ENCODE measurements at regions of chr21 and their contacts with region 1.

Region 1: DNA sequence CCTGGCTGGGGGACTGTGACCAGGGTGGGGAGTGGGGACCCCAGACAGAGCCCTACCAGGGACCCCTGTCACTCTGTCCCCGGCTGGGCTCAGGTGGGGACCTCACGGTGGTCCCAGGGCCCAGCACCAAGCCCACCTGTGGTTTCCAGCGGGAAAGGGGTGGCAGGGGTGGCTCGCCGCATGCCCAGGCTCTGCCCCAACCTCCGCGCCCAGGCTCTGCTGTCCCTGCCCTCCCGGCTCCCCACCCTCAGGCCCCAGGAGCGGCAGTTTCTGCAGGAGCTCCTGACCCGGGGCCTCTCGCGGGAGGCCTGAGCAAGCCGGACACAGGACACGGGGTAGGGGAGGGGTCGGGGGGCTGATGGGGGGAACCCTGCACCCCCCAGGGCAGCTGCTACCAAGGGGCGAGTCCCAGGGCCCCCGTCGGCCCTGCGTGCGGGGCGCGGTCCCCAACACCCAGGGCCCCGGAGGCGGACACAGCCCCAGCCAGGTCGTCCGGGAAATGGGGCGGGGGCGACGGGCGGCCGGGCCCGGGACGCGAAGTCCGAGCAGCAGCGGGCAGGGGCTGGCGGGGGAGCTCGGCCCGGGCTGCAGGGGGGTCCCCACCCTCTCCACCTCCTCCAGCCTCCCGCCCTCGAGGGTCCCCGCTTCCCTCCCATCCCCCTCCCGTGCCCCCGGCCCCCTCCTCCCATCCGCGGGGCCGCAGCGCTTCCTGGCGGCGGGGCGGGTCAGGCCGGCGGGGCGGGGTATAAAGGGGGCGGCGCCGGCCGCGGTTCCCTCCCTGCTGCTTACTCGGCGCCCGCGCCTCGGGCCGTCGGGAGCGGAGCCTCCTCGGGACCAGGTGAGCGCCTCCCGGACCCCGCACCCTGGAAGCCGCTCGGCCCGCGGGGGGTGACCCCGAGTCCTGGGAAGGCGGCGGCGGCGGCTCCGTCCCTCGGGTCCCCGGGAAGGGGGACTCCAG is at the start of gene COL6A2:
- DNase-seq: peak; percentile 8 to 83
- H3K4me3 ChIP-seq: peak within 1 kb of the TSS; percentile 85 to 98
- H3K27ac ChIP-seq: peak within 1 kb of the TSS; percentile 98 to 99
- H3K4me1 ChIP-seq: peaks cover 14 to 20% of the 10 kb centered on the region in 2 donors
- H3K27me3 ChIP-seq: no peaks in the 10 kb centered on the region
- CTCF ChIP-seq: peak in 2 of 3 experiments; percentile 39 to 66
- total RNA-seq, gene COL6A2: 1,704 TPM

Region 2: DNA sequence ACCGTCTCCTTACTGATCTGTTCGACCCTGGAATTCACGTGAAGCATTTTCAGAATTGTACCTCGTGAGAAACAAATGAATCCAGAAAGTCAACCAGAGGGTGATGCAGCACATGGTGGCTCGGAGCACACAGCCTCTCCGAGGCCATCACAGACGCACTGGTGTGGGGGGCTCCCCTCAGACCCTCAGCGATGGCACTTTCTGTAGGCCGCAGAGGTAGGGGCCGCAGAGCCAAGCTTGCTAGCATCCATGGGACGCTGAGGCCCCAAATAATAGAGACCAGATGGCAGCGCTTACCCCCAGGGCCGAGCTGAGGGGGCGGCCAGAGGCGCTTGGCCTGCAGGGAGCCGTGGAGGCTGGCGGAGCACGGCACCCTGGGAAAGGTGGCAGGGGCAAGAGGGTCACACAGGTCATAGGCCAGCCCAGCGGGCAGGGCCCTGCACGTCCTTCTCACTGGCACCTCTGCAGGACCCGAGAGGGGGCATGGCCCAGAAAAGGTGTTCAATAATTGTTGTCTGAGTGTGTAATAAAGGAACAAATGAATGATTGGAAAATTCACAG is 27.8 kb before region 1 on chr21:
- intact Hi-C with region 1: no loop called
- DNase-seq: peak in 1 of 2 donors; percentile 11
- H3K4me3 ChIP-seq: no peak overlapping the region
- H3K27ac ChIP-seq: no peak overlapping the region
- H3K4me1 ChIP-seq: peaks cover 14 to 30% of the 10 kb centered on the region in 2 donors
- H3K27me3 ChIP-seq: no peaks in the 10 kb centered on the region
- CTCF ChIP-seq: no peak

Region 3: DNA sequence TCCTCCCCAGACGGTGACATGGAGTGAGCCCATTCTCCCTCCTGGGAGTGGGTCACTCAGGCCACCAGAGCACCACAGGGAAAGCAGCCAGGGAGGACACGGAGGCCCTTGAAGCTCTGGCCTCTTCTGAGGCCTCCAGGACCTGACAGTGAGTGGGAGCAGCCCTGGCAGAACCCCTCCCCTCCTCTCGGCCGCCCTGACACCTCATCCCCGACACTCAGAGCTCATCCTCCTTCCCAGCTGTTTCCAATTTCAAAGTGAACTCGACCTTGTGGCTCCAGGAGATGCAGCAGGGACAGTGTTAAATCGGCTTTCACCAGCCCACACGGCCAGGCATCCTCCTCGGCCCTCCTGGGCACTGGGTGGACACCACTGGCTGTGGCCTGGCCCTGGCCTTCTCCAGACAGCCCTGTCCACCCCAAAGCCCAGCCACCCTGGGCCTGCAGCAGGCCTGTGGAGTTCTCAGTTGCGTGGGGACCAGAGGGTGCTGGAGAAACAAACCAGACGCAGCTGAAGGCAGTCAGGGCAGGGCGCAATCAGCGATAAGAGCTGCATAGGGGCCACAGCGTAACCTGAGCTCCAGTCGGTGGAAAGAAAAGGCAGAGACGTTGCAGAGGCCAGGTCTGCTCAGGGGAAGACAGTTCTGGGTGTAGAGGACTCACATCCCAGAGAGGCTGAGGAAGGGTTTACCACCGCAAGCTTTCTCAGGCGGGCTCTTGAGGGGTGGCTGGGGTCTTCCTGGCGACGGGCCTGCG is 30.7 kb after region 1 on chr21:
- intact Hi-C with region 1: loop called (anchors 2 kb)
- DNase-seq: peak in 1 of 2 donors; percentile 55
- H3K4me3 ChIP-seq: no peak overlapping the region
- H3K27ac ChIP-seq: no peak overlapping the region
- H3K4me1 ChIP-seq: no peaks in the 10 kb centered on the region
- H3K27me3 ChIP-seq: no peaks in the 10 kb centered on the region
- CTCF ChIP-seq: no peak